ENCODE measurements at regions of chr1 and their contacts with region 1.

Region 1: DNA sequence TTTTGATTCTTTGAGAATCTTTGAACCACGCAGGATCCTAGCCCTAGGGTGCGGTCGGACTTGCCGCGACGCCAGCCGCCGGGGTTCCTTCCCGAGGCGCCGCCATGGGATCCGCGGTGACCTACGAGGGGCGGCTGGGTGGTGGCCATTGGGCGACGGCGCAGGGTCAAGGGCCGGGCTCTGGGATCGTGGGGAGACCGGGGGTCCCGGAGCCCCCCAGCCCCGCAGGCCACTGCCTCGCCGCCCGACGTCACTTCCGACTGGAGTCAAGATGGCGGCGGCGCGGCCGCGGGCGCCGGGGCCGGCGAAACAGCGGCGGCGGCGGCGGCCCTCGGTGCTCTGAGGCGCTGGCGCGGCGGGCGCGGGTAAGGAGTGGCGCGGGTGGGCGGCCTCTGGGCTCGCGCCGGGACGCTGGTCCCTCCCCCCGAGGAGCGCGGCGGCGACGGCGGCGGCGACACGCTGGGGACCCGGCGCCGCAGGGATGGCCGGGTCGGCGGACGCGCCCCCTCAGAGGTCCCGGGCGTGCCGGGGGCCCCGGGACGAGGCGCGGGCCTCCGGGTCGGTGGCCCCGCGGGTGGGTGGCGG is at the start of gene PRDM2:
- DNase-seq: peak; percentile 14
- H3K4me3 ChIP-seq: peak within 1 kb of the TSS; percentile 72 to 90
- H3K27ac ChIP-seq: peak within 1 kb of the TSS; percentile 94 to 96
- H3K4me1 ChIP-seq: peaks cover 2% of the 10 kb centered on the region
- H3K27me3 ChIP-seq: no peaks in the 10 kb centered on the region
- CTCF ChIP-seq: no peak
- POLR2A ChIP-seq: peak; percentile 16
- total RNA-seq, gene PRDM2: 27.8 to 38.9 TPM

Region 2: GRCh38 chr1:13748610-13749505 is 48.8 kb after region 1 on chr1:
- intact Hi-C with region 1: loop called (anchors 1 kb)
- DNase-seq: peak; percentile 98
- H3K4me3 ChIP-seq: peak overlapping the region; percentile 94 to 99
- H3K27ac ChIP-seq: peak overlapping the region; percentile 92 to 93
- H3K4me1 ChIP-seq: no peaks in the 10 kb centered on the region
- H3K27me3 ChIP-seq: no peaks in the 10 kb centered on the region
- CTCF ChIP-seq: peak in 2 of 4 experiments; percentile 14 to 36
- POLR2A ChIP-seq: peak; percentile 89

Region 3: GRCh38 chr1:13851726-13852125 is 151.7 kb after region 1 on chr1:
- intact Hi-C with region 1: no loop called
- DNase-seq: no peak
- H3K4me3 ChIP-seq: no peak overlapping the region
- H3K27ac ChIP-seq: no peak overlapping the region
- H3K4me1 ChIP-seq: no peaks in the 10 kb centered on the region
- H3K27me3 ChIP-seq: no peaks in the 10 kb centered on the region
- CTCF ChIP-seq: no peak
- POLR2A ChIP-seq: no peak

Region 4: GRCh38 chr1:13960375-13960987 is 260.5 kb after region 1 on chr1:
- intact Hi-C with region 1: no loop called
- DNase-seq: peak; percentile 64
- H3K4me3 ChIP-seq: no peak overlapping the region
- H3K27ac ChIP-seq: no peak overlapping the region
- H3K4me1 ChIP-seq: no peaks in the 10 kb centered on the region
- H3K27me3 ChIP-seq: no peaks in the 10 kb centered on the region
- CTCF ChIP-seq: peak; percentile 89 to 94 (median 93)
- POLR2A ChIP-seq: no peak